ENCODE measurements at regions of chr12 and their contacts with region 1.

Region 1: DNA sequence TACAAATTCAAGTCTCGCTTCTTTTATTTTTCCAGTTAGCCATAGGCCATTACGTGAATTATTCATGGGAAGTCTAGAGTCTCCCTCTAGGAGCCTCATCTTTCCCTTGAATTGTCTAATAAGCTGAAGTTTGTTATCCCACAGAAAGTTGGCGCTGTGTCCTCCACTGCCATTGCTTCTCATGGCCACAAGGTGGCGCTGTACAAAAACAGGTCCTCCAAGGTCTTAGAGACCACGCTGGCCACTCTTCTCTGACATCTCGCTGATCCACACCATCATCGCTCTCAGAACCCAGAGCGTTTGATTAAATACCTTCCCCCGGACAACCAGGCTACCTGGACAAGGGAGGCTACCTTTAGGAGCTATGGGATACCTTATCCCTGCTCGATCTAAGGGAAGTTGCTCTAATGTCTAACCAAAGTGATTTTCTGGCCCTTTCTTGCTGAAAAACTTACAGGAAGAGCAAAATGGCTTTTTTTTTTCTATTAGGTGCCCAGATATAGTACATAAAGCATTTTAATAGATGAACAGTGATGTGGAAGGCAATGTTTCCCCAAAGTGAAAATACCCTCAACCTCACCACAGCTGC is 110.0 kb downstream of the CCDC60 start:
- DNase-seq: peak; percentile 72
- ATAC-seq: peak; percentile 85
- H3K4me3 ChIP-seq: no peak overlapping the region
- H3K27ac ChIP-seq: no peak overlapping the region
- H3K4me1 ChIP-seq: no peaks in the 10 kb centered on the region
- H3K27me3 ChIP-seq: no peaks in the 10 kb centered on the region
- CTCF ChIP-seq: peak; percentile 82
- EP300 ChIP-seq: no peak
- POLR2A ChIP-seq: no peak
- RAD21 ChIP-seq: peak; percentile 46; the same call in 1 of the 2 replicates

Region 2: DNA sequence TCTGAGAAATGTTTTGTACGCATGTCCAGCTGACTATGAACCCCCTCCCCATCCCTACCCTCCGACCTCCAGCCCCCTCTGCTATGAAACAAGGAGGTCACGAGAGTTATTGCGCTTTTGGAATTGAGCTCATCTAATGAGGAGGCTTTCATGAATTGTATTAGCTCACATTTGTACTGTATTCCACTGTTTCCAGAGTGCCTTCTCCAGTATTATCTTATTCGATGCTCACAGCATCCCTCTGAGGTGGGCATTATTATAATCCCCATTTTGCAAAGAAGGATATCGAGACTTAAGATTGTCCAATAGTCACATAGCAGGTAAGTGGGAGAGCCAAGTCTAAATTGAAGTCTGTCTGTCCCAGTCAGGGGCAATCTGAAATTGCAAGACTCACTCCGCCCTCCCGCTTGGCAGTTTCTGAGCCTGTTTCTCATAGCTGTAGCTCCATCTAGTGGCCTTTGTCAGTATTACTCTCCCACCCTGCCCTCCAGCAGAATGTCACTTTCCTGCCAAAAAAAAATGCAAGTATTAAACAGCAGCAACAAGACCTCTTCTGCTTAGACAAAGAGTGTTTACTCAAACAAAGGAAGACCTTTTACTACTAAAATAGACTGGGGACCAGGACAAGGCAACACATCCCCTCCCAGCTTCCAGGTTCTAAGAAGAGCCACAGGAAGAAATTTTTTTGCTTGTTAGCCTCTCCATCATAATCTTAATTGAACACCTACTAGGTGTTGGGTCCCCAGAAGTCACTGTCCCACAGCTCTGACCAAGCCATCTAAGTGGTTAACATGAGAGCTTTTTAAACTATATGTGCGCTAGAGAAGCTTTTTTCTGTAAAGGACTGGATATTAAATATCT is 100.4 kb after region 1 on chr12:
- CTCF ChIA-PET with region 1: interaction called, 27 read pairs
- POLR2A ChIA-PET with region 1: no interaction called
- in situ Hi-C with region 1: loop called (anchors 5 kb)
- intact Hi-C with region 1: loop called (anchors 1 kb)
- DNase-seq: peak; percentile 32
- ATAC-seq: peak; percentile 71
- H3K4me3 ChIP-seq: no peak overlapping the region
- H3K27ac ChIP-seq: no peak overlapping the region
- H3K4me1 ChIP-seq: no peaks in the 10 kb centered on the region
- H3K27me3 ChIP-seq: no peaks in the 10 kb centered on the region
- CTCF ChIP-seq: peak; percentile 82
- EP300 ChIP-seq: no peak
- POLR2A ChIP-seq: no peak
- RAD21 ChIP-seq: peak; percentile 59; the same call in 1 of the 2 replicates

Region 3: DNA sequence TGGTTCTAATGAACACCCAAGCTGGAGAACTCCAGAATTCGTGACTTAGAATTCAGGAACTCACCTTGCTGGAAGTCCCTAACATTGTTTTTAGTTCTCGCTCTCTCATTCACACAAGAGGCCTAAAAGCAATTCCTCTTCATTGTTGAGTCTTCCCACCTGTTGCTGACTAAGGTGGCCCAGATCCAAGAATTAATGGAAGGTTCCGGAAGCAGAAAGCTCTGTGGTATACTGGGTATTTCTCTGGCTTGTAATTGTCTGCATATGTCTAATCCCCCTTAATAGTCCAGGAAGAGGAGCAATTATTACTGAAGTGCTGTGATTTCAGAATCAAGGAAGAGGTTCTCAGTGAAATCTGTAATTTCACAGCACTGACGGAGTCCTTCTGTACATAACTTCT is 180.4 kb after region 1 on chr12:
- CTCF ChIA-PET with region 1: no interaction called
- POLR2A ChIA-PET with region 1: no interaction called
- in situ Hi-C with region 1: no loop called
- intact Hi-C with region 1: no loop called
- DNase-seq: no peak
- ATAC-seq: no peak
- H3K4me3 ChIP-seq: no peak overlapping the region
- H3K27ac ChIP-seq: no peak overlapping the region
- H3K4me1 ChIP-seq: peaks cover 17% of the 10 kb centered on the region
- H3K27me3 ChIP-seq: no peaks in the 10 kb centered on the region
- CTCF ChIP-seq: no peak
- EP300 ChIP-seq: no peak
- POLR2A ChIP-seq: no peak
- RAD21 ChIP-seq: no peak